ENCODE measurements at regions of chr10 and their contacts with region 1.

Region 1: GRCh38 chr10:118341791-118342637 is at the start of gene FAM204A:
- DNase-seq: peak; percentile 92 to 99 (median 97)
- ATAC-seq: peak; percentile 99
- H3K4me3 ChIP-seq: peak within 1 kb of the TSS; percentile 69
- H3K4me3 Mint-ChIP-seq: peak within 1 kb of the TSS; percentile 88 to 98 (median 96)
- H3K27ac ChIP-seq: peak within 1 kb of the TSS; percentile 78
- H3K27ac Mint-ChIP-seq: peak within 1 kb of the TSS; percentile 84 to 98 (median 95)
- H3K4me1 ChIP-seq: peaks cover 22% of the 10 kb centered on the region in 2 donors
- H3K4me1 Mint-ChIP-seq: peaks cover 20 to 69% (median 59%) of the 10 kb centered on the region in 7 donors
- H3K27me3 ChIP-seq: no peaks in the 10 kb centered on the region
- H3K27me3 Mint-ChIP-seq: peaks cover 0 to 2% (median 0%) of the 10 kb centered on the region in 5 donors
- total RNA-seq, gene FAM204A: 56.6 to 69.6 (median 63.0) TPM

Region 2: GRCh38 chr10:116756277-116756676 is 1585.7 kb before region 1 on chr10:
- CTCF ChIA-PET with region 1: no interaction called
- POLR2A ChIA-PET with region 1: no interaction called
- intact Hi-C with region 1: no loop called
- DNase-seq: no peak
- ATAC-seq: no peak
- H3K4me3 ChIP-seq: no peak overlapping the region
- H3K4me3 Mint-ChIP-seq: no peak overlapping the region
- H3K27ac ChIP-seq: no peak overlapping the region
- H3K27ac Mint-ChIP-seq: no peak overlapping the region
- H3K4me1 ChIP-seq: no peaks in the 10 kb centered on the region
- H3K4me1 Mint-ChIP-seq: no peaks in the 10 kb centered on the region
- H3K27me3 ChIP-seq: no peaks in the 10 kb centered on the region
- H3K27me3 Mint-ChIP-seq: peaks cover 17 to 53% (median 40%) of the 10 kb centered on the region in 5 donors

Region 3: GRCh38 chr10:117375360-117376178 is 966.4 kb before region 1 on chr10 and contains the start of gene PDZD8:
- CTCF ChIA-PET with region 1: no interaction called
- POLR2A ChIA-PET with region 1: no interaction called
- intact Hi-C with region 1: loop called (anchors 1 kb)
- DNase-seq: peak; percentile 84 to 93 (median 89)
- ATAC-seq: peak; percentile 93
- H3K4me3 ChIP-seq: peak within 1 kb of the TSS; percentile 92
- H3K4me3 Mint-ChIP-seq: peak within 1 kb of the TSS; percentile 94 to 98 (median 96)
- H3K27ac ChIP-seq: peak within 1 kb of the TSS; percentile 78
- H3K27ac Mint-ChIP-seq: peak within 1 kb of the TSS; percentile 73 to 94 (median 92)
- H3K4me1 ChIP-seq: peaks cover 15 to 21% of the 10 kb centered on the region in 2 donors
- H3K4me1 Mint-ChIP-seq: peaks cover 21 to 36% (median 32%) of the 10 kb centered on the region in 7 donors
- H3K27me3 ChIP-seq: no peaks in the 10 kb centered on the region
- H3K27me3 Mint-ChIP-seq: peaks cover 6 to 45% (median 25%) of the 10 kb centered on the region in 5 donors
- total RNA-seq, gene PDZD8: 12.6 to 24.0 (median 17.1) TPM

Region 4: DNA sequence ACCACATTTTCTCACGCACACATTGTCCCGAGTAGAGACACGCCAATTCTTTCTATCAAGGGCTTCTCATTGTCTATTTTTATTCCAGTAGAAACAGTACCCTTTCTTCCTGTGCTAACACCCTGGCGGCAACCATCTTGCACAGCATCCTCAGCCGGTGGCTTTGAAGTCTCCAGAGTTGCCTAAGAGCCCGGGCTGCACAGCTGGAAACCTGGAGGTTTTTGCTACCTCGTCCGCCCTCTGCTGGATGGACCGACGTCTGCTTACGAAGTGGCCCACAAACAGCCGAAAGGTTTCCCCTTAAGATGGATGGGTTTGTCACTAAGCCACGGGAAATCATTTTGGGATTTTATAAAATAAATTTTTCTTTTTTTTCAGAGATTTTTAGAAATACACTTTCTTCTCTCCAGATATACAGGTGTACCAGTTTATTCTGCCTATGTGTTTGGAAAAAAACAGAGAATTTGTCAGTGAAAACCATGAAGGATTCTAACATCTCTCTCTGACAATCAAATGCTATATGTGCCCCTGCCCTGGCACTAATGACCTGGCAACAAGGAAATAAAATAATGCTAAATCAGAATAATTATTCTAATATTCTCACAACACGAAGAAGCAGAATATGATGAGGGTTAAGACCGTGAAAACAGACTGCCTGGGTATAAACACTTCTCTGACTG is 81.9 kb after region 1 on chr10:
- CTCF ChIA-PET with region 1: no interaction called
- POLR2A ChIA-PET with region 1: no interaction called
- intact Hi-C with region 1: loop called (anchors 1 to 2 kb)
- DNase-seq: peak; percentile 14 to 57 (median 46)
- ATAC-seq: peak; percentile 80
- H3K4me3 ChIP-seq: no peak overlapping the region
- H3K4me3 Mint-ChIP-seq: no peak overlapping the region
- H3K27ac ChIP-seq: no peak overlapping the region
- H3K27ac Mint-ChIP-seq: no peak overlapping the region
- H3K4me1 ChIP-seq: no peaks in the 10 kb centered on the region
- H3K4me1 Mint-ChIP-seq: no peaks in the 10 kb centered on the region
- H3K27me3 ChIP-seq: no peaks in the 10 kb centered on the region
- H3K27me3 Mint-ChIP-seq: peaks cover 14 to 41% (median 24%) of the 10 kb centered on the region in 5 donors

Region 5: GRCh38 chr10:118543714-118544400 is 201.8 kb after region 1 on chr10:
- CTCF ChIA-PET with region 1: no interaction called
- POLR2A ChIA-PET with region 1: no interaction called
- intact Hi-C with region 1: loop called in 1 of 2 experiments (anchors 10 kb)
- DNase-seq: peak in 8 of 9 donors; percentile 13 to 43 (median 26)
- ATAC-seq: peak; percentile 67
- H3K4me3 ChIP-seq: no peak overlapping the region
- H3K4me3 Mint-ChIP-seq: peak overlapping the region in 1 of 10 donors; percentile 23
- H3K27ac ChIP-seq: no peak overlapping the region
- H3K27ac Mint-ChIP-seq: no peak overlapping the region
- H3K4me1 ChIP-seq: no peaks in the 10 kb centered on the region
- H3K4me1 Mint-ChIP-seq: peaks cover 0 to 3% (median 0%) of the 10 kb centered on the region in 7 donors
- H3K27me3 ChIP-seq: peaks cover 0 to 5% of the 10 kb centered on the region in 2 donors
- H3K27me3 Mint-ChIP-seq: peaks cover 28 to 59% (median 56%) of the 10 kb centered on the region in 5 donors

Region 6: GRCh38 chr10:119872860-119873681 is 1531.1 kb after region 1 on chr10:
- CTCF ChIA-PET with region 1: no interaction called
- POLR2A ChIA-PET with region 1: no interaction called
- intact Hi-C with region 1: loop called in 1 of 2 experiments (anchors 5 kb)
- DNase-seq: peak; percentile 81 to 88 (median 86)
- ATAC-seq: peak; percentile 96
- H3K4me3 ChIP-seq: peak overlapping the region; percentile 97
- H3K4me3 Mint-ChIP-seq: peak overlapping the region; percentile 82 to 92 (median 89)
- H3K27ac ChIP-seq: peak overlapping the region; percentile 84
- H3K27ac Mint-ChIP-seq: peak overlapping the region; percentile 79 to 95 (median 92)
- H3K4me1 ChIP-seq: peaks cover 21 to 28% of the 10 kb centered on the region in 2 donors
- H3K4me1 Mint-ChIP-seq: peaks cover 23 to 46% (median 41%) of the 10 kb centered on the region in 7 donors
- H3K27me3 ChIP-seq: no peaks in the 10 kb centered on the region
- H3K27me3 Mint-ChIP-seq: peaks cover 0 to 6% (median 0%) of the 10 kb centered on the region in 5 donors